ENCODE measurements at regions of chr17 and their contacts with region 1.

Region 1: GRCh38 chr17:31524926-31525800 is 133.7 kb downstream of the RAB11FIP4 start:
- DNase-seq: peak; percentile 93
- ATAC-seq: peak; percentile 94
- H3K4me3 ChIP-seq: no peak overlapping the region
- H3K27ac ChIP-seq: no peak overlapping the region
- H3K4me1 ChIP-seq: peaks cover 1% of the 10 kb centered on the region; the same call in 1 of the 2 replicates
- H3K27me3 ChIP-seq: peaks cover 2% of the 10 kb centered on the region; the same call in 1 of the 2 replicates
- CTCF ChIP-seq: peak; percentile 96
- POLR2A ChIP-seq: no peak
- RAD21 ChIP-seq: peak; percentile 97

Region 2: GRCh38 chr17:31388770-31389661 is 136.1 kb before region 1 on chr17:
- CTCF ChIA-PET with region 1: interaction called, 3 read pairs
- POLR2A ChIA-PET with region 1: no interaction called
- dilution Hi-C with region 1: no loop called
- in situ Hi-C with region 1: no loop called
- intact Hi-C with region 1: loop called (anchors 1 kb)
- DNase-seq: no peak
- ATAC-seq: peak; percentile 58
- H3K4me3 ChIP-seq: no peak overlapping the region
- H3K27ac ChIP-seq: no peak overlapping the region
- H3K4me1 ChIP-seq: peaks cover 2% of the 10 kb centered on the region; the same call in 1 of the 2 replicates
- H3K27me3 ChIP-seq: peaks cover 37% of the 10 kb centered on the region
- CTCF ChIP-seq: peak; percentile 59
- POLR2A ChIP-seq: no peak
- RAD21 ChIP-seq: peak; percentile 57